ENCODE measurements at regions of chr4 and their contacts with region 1.

Region 1: GRCh38 chr4:109665783-109666485 is 37.3 kb downstream of the CASP6 start:
- DNase-seq: no peak
- H3K4me3 ChIP-seq: no peak overlapping the region
- H3K27ac ChIP-seq: no peak overlapping the region
- H3K27me3 ChIP-seq: no peaks in the 10 kb centered on the region
- CTCF ChIP-seq: no peak

Region 2: GRCh38 chr4:109559983-109560686 is 105.8 kb before region 1 on chr4 and contains the start of gene MCUB:
- intact Hi-C with region 1: loop called in 1 of 2 experiments (anchors 10 kb)
- DNase-seq: peak; percentile 30 to 86 (median 64)
- H3K4me3 ChIP-seq: peak within 1 kb of the TSS; percentile 53 to 89 (median 77)
- H3K27ac ChIP-seq: peak within 1 kb of the TSS in 34 of 59 donors; percentile 12 to 79 (median 44)
- H3K27me3 ChIP-seq: no peaks in the 10 kb centered on the region
- CTCF ChIP-seq: peak in 4 of 56 donors; percentile 4 to 17 (median 8)
- total RNA-seq, gene MCUB: 1.3 to 14.3 (median 4.8) TPM